ENCODE measurements at regions of chr11 and their contacts with region 1.

Region 1: GRCh38 chr11:73625696-73626318 is 20.6 kb upstream of the PLEKHB1 start:
- DNase-seq: peak; percentile 83
- ATAC-seq: peak; percentile 67
- H3K4me3 Mint-ChIP-seq: no peak overlapping the region
- H3K27ac Mint-ChIP-seq: no peak overlapping the region
- H3K4me1 Mint-ChIP-seq: peaks cover 28% of the 10 kb centered on the region
- H3K27me3 Mint-ChIP-seq: peaks cover 96% of the 10 kb centered on the region
- CTCF ChIP-seq: peak; percentile 92

Region 2: GRCh38 chr11:73393479-73394380 is 232.1 kb before region 1 on chr11:
- CTCF ChIA-PET with region 1: interaction called, 17 read pairs
- POLR2A ChIA-PET with region 1: no interaction called
- DNase-seq: peak; percentile 87
- ATAC-seq: peak; percentile 84
- H3K4me3 Mint-ChIP-seq: no peak overlapping the region
- H3K27ac Mint-ChIP-seq: no peak overlapping the region
- H3K4me1 Mint-ChIP-seq: no peaks in the 10 kb centered on the region
- H3K27me3 Mint-ChIP-seq: no peaks in the 10 kb centered on the region
- CTCF ChIP-seq: peak; percentile 68

Region 3: GRCh38 chr11:73478738-73479347 is 147.0 kb before region 1 on chr11:
- CTCF ChIA-PET with region 1: interaction called, 40 read pairs
- POLR2A ChIA-PET with region 1: no interaction called
- DNase-seq: peak; percentile 28
- ATAC-seq: peak; percentile 88
- H3K4me3 Mint-ChIP-seq: no peak overlapping the region
- H3K27ac Mint-ChIP-seq: no peak overlapping the region
- H3K4me1 Mint-ChIP-seq: peaks cover 28% of the 10 kb centered on the region
- H3K27me3 Mint-ChIP-seq: no peaks in the 10 kb centered on the region
- CTCF ChIP-seq: peak; percentile 52

Region 4: GRCh38 chr11:73597956-73598718 is 27.7 kb before region 1 on chr11 and contains the start of gene FAM168A:
- CTCF ChIA-PET with region 1: interaction called, 13 read pairs
- POLR2A ChIA-PET with region 1: no interaction called
- DNase-seq: peak; percentile 94
- ATAC-seq: peak; percentile 91
- H3K4me3 Mint-ChIP-seq: peak within 1 kb of the TSS; percentile 80
- H3K27ac Mint-ChIP-seq: peak within 1 kb of the TSS; percentile 85
- H3K4me1 Mint-ChIP-seq: peaks cover 43% of the 10 kb centered on the region
- H3K27me3 Mint-ChIP-seq: no peaks in the 10 kb centered on the region
- CTCF ChIP-seq: no peak
- total RNA-seq, gene FAM168A: 23.6 to 25.9 TPM (median 24.2 TPM) in 3 replicates

Region 5: GRCh38 chr11:73640592-73640991 is 14.8 kb after region 1 on chr11:
- CTCF ChIA-PET with region 1: interaction called, 104 read pairs
- POLR2A ChIA-PET with region 1: interaction called, 6 read pairs
- DNase-seq: no peak
- ATAC-seq: no peak
- H3K4me3 Mint-ChIP-seq: no peak overlapping the region
- H3K27ac Mint-ChIP-seq: no peak overlapping the region
- H3K4me1 Mint-ChIP-seq: peaks cover 6% of the 10 kb centered on the region
- H3K27me3 Mint-ChIP-seq: peaks cover 92% of the 10 kb centered on the region
- CTCF ChIP-seq: no peak

Region 6: DNA sequence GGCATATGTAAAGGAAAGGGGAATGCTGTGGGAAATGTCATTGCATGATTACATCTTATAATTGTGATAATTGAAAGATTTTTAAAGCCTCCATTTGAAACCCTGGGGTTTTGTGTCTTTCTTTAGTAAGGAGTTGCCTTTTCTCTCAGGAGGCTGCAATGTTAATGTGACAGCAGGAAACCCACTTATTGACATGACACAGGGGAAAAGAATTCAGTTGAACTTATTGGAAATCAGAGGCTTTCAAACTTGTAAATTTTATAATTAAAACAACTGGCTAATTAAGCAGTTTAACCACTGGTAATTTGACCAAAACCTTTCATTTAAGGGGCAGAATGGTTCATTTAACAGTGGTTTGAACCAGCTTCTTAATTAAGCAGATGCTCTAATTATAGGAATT is 193.0 kb after region 1 on chr11:
- CTCF ChIA-PET with region 1: no interaction called
- POLR2A ChIA-PET with region 1: no interaction called
- DNase-seq: no peak
- ATAC-seq: no peak
- H3K4me3 Mint-ChIP-seq: no peak overlapping the region
- H3K27ac Mint-ChIP-seq: no peak overlapping the region
- H3K4me1 Mint-ChIP-seq: peaks cover 29% of the 10 kb centered on the region
- H3K27me3 Mint-ChIP-seq: no peaks in the 10 kb centered on the region
- CTCF ChIP-seq: no peak

Region 7: GRCh38 chr11:73931039-73931645 is 305.3 kb after region 1 on chr11:
- CTCF ChIA-PET with region 1: interaction called, 33 read pairs
- POLR2A ChIA-PET with region 1: no interaction called
- DNase-seq: peak; percentile 34
- ATAC-seq: peak; percentile 99
- H3K4me3 Mint-ChIP-seq: no peak overlapping the region
- H3K27ac Mint-ChIP-seq: no peak overlapping the region
- H3K4me1 Mint-ChIP-seq: 0 out of 2 replicates have a peak, but pooled peaks cover 2% of the 10 kb centered on the region
- H3K27me3 Mint-ChIP-seq: no peaks in the 10 kb centered on the region
- CTCF ChIP-seq: no peak